Adrenal gland (tissue), 19 donors: ENCODE measurements at regions of chr10 and their contacts with region 1.

Region 1: DNA sequence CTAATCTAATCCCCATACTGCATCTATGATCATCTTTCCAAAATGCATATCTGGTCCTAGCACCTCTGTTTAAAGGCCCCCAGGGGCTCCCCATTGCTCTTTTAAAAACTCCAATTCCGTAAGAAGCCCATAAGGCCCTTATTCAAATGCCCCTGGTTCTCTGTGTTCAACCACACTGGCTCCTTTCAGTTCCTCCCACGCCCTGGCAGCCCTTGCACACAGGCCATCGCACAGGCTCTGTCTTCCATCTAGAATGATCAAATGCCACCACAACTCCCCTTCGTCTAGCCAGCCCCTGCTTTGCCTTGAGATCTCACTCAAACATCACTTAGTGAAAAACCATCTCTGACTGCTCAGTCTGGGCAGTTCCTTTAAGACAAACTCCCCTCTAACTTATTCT is 112.9 kb upstream of the LYZL2 start:
- DNase-seq: no peak
- H3K4me3 ChIP-seq: no peak overlapping the region
- H3K27ac ChIP-seq: no peak overlapping the region
- H3K4me1 ChIP-seq: no peaks in the 10 kb centered on the region
- H3K27me3 ChIP-seq: no peaks in the 10 kb centered on the region
- CTCF ChIP-seq: no peak
- POLR2A ChIP-seq: no peak

Region 2: GRCh38 chr10:31808258-31809218 is 1066.1 kb after region 1 on chr10:
- intact Hi-C with region 1: loop called in 1 of 2 experiments (anchors 10 kb)
- DNase-seq: peak; percentile 31 to 67 (median 48)
- H3K4me3 ChIP-seq: peak overlapping the region in 2 of 4 donors; percentile 13 to 59
- H3K27ac ChIP-seq: peak overlapping the region; percentile 18 to 90 (median 59)
- H3K4me1 ChIP-seq: no peaks in the 10 kb centered on the region
- H3K27me3 ChIP-seq: no peaks in the 10 kb centered on the region
- CTCF ChIP-seq: peak; percentile 39 to 83 (median 72)
- POLR2A ChIP-seq: no peak